ENCODE measurements at regions of chr2 and their contacts with region 1.

Region 1: DNA sequence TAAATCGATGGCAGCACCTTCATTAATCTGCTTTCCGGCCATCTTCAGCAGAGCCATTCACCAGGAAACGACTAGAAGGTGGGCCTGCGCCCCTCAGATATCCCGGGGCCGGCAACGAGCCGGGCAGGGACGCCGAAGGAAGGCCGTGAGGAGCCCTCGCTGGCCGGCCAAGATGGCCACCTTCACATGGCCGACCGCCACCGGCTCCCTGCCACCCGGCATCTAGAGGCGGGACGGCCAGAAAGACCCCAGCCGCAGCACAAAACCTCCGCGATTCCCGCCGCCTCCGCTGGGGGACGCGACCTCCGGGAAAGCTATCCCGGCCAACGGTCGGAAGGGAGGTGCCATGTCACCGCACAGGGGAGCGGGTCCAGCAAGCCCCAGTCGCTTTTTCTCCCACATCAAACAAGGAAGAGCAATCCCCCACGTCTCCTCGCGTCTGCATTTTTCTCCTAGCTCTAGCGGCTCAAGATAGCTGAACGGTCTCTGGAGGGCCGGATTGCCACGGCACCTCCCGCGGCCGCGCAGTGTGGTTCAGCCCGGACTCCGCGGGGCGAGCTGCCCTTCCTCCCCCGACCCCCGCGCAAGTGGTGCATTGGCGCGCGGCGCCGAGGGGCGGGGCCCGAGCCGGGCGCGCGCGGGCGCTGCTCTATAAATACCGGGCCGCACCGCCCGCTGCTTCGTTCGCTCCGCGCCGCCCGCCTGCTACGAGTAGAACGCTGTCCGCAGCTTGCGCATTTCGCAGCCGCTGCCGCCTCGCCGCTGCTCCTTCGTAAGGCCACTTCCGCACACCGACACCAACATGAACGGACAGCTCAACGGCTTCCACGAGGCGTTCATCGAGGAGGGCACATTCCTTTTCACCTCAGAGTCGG is at the start of gene MAT2A:
- H3K4me3 ChIP-seq: peak within 1 kb of the TSS; percentile 98
- H3K27ac ChIP-seq: peak within 1 kb of the TSS; percentile 99
- H3K4me1 ChIP-seq: 0 out of 2 replicates have a peak, but pooled peaks cover 2% of the 10 kb centered on the region
- CTCF ChIP-seq: peak; percentile 96

Region 2: DNA sequence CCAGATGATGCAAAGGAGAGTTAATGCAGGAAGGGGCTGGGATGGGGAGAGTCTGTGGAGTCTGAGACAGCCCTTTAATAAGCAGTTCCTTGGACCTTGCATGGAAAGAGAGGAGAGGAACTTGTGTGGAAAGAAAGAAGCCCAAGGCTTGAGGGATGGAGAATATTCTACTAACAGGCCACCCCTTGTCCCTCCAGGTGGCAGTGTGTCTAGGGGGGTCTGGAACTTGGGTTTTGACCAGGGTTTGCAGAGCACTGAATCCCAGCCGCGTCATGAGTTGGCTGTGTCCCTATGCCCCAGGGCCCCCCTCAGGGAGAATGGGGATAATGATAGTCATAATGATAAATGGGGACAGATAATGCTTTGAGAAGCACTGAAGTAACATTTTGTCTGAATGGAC is 390.5 kb before region 1 on chr2:
- CTCF ChIA-PET with region 1: no interaction called
- POLR2A ChIA-PET with region 1: no interaction called
- H3K4me3 ChIP-seq: no peak overlapping the region
- H3K27ac ChIP-seq: no peak overlapping the region
- H3K4me1 ChIP-seq: peaks cover 6% of the 10 kb centered on the region; the same call in 1 of the 2 replicates
- CTCF ChIP-seq: no peak

Region 3: DNA sequence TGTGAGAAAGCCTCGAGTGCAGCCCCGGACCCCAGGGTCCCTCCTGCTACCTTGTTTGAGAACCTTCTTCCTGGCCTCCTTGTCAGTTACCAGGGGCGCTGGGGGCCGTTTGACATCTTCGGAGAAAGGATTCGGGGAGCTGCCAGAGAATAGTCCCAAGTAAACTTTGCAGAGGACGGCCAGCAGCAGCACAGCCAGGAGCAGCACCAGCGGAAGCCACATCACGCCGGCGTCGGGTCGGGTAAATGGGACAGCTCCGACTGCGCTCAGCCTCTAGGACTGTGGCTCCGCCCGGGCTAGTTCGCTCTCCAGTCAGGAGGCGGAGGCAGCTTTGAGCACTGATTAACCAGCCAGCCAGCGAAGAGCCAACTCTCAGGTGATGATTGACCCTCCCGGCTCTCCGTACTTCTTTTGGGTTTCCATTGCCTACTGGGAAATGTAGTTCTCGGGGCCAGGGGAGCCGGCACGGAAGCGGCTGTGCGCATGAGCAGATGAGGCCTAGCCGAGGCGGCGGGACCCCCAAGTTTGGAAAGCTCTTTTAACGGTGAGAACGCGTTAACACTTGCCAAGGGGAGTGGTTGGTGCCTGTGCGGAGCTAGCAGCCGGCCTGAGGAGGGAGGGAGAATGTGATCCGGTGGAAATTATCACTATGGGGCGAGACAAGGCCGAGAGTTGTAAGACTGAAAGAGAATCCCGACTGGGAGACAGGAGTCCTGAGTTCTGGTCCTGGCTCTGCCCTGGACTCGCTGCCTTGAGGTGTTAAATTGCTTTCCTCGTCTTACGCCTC is 184.2 kb before region 1 on chr2 and contains the starts of genes ELMOD3 and RETSAT:
- CTCF ChIA-PET with region 1: interaction called, 3 read pairs
- POLR2A ChIA-PET with region 1: interaction called, 14 read pairs
- H3K4me3 ChIP-seq: peak within 1 kb of the TSS; percentile 75
- H3K27ac ChIP-seq: peak within 1 kb of the TSS; percentile 66
- H3K4me1 ChIP-seq: no peaks in the 10 kb centered on the region; the same call in 1 of the 2 replicates
- CTCF ChIP-seq: no peak

Region 4: GRCh38 chr2:85430752-85431569 is 107.8 kb before region 1 on chr2:
- CTCF ChIA-PET with region 1: interaction called, 7 read pairs
- POLR2A ChIA-PET with region 1: interaction called, 24 read pairs
- H3K4me3 ChIP-seq: no peak overlapping the region
- H3K27ac ChIP-seq: no peak overlapping the region
- H3K4me1 ChIP-seq: no peaks in the 10 kb centered on the region
- CTCF ChIP-seq: no peak

Region 5: GRCh38 chr2:85468704-85469349 is 69.9 kb before region 1 on chr2:
- CTCF ChIA-PET with region 1: interaction called, 12 read pairs
- POLR2A ChIA-PET with region 1: interaction called, 10 read pairs
- H3K4me3 ChIP-seq: no peak overlapping the region
- H3K27ac ChIP-seq: no peak overlapping the region
- H3K4me1 ChIP-seq: no peaks in the 10 kb centered on the region
- CTCF ChIP-seq: no peak; the same call in 1 of the 2 replicates

Region 6: GRCh38 chr2:85524336-85524933 is 14.3 kb before region 1 on chr2:
- CTCF ChIA-PET with region 1: no interaction called
- POLR2A ChIA-PET with region 1: interaction called, 16 read pairs
- H3K4me3 ChIP-seq: no peak overlapping the region
- H3K27ac ChIP-seq: peak overlapping the region; percentile 18
- H3K4me1 ChIP-seq: peaks cover 14% of the 10 kb centered on the region
- CTCF ChIP-seq: no peak

Region 7: GRCh38 chr2:85595301-85596025 is 56.7 kb after region 1 on chr2 and contains the start of gene RNF181:
- CTCF ChIA-PET with region 1: no interaction called
- POLR2A ChIA-PET with region 1: interaction called, 14 read pairs
- H3K4me3 ChIP-seq: peak within 1 kb of the TSS; percentile 79
- H3K27ac ChIP-seq: peak within 1 kb of the TSS; percentile 77
- H3K4me1 ChIP-seq: 0 out of 2 replicates have a peak, but pooled peaks cover 3% of the 10 kb centered on the region
- CTCF ChIP-seq: no peak

Measured in HEK293 (cell line).